Lower lobe of right lung (tissue), 2 donors: ENCODE measurements at regions of chr11 and their contacts with region 1.

Region 1: GRCh38 chr11:120511116-120511819 is at the start of gene GRIK4:
- DNase-seq: peak; percentile 85
- ATAC-seq: peak; percentile 85 to 88
- H3K4me3 ChIP-seq: peak within 1 kb of the TSS; percentile 50
- H3K27ac ChIP-seq: no peak within 1 kb of the TSS
- H3K4me1 ChIP-seq: no peaks in the 10 kb centered on the region
- H3K27me3 ChIP-seq: peaks cover 53% of the 10 kb centered on the region
- CTCF ChIP-seq: peak; percentile 97
- total RNA-seq, gene GRIK4: 2.2 TPM

Region 2: DNA sequence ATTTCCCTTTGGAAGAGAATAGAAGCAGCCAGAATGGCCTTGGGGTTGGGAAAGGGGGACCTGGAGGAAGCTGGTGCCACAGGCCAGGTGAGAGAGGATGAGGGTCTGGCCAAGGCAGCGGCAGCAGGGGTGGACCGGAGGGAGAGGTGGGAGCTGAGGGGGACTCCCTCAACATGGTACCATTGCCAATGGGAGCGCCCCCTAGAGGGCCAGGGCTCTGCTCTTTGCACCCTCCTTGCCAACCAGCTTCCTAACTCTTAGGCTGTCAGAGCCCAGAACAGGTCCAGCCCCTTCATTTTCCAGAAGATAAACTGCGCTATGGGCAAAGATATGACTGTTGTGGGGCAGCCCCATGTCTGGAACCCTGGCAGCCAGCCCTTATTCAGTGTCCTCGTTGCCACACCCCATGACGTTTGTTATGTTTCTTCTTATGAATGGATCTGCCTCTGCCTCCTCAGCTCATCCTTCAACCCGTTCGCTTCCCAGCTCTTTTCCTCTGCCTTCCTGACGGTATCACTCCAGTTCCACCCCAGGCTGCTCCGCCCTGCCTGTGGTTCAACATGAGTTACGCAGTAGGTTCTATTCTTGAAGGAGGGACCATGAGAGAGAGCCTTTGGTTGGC is 185.4 kb after region 1 on chr11:
- intact Hi-C with region 1: loop called (anchors 10 kb)
- DNase-seq: no peak
- ATAC-seq: no peak
- H3K4me3 ChIP-seq: no peak overlapping the region
- H3K27ac ChIP-seq: no peak overlapping the region
- H3K4me1 ChIP-seq: no peaks in the 10 kb centered on the region
- H3K27me3 ChIP-seq: no peaks in the 10 kb centered on the region
- CTCF ChIP-seq: no peak

Region 3: DNA sequence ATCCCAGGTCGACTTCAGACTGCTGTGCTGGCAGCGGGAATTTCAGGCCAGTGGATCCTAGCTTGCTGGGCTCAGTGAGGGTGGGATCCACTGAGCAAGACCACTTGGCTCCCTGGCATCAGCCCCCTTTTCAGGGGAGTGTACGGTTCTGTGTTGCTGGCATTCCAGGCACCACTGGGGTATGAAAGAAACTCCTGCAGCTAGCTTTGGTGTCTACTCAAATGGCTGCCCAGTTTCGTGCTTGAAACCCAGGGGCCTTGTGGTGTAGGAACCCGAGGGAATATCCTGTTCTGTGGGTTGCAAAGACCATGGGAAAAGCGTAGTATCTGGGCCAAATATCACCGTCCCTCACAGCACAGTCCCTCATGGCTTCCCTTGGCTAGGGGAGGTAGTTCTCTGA is 255.1 kb after region 1 on chr11:
- intact Hi-C with region 1: no loop called
- DNase-seq: no peak
- ATAC-seq: no peak
- H3K4me3 ChIP-seq: no peak overlapping the region
- H3K27ac ChIP-seq: no peak overlapping the region
- H3K4me1 ChIP-seq: no peaks in the 10 kb centered on the region
- H3K27me3 ChIP-seq: peaks cover 7% of the 10 kb centered on the region
- CTCF ChIP-seq: no peak